ENCODE measurements at regions of chr16 and their contacts with region 1.

Region 1: DNA sequence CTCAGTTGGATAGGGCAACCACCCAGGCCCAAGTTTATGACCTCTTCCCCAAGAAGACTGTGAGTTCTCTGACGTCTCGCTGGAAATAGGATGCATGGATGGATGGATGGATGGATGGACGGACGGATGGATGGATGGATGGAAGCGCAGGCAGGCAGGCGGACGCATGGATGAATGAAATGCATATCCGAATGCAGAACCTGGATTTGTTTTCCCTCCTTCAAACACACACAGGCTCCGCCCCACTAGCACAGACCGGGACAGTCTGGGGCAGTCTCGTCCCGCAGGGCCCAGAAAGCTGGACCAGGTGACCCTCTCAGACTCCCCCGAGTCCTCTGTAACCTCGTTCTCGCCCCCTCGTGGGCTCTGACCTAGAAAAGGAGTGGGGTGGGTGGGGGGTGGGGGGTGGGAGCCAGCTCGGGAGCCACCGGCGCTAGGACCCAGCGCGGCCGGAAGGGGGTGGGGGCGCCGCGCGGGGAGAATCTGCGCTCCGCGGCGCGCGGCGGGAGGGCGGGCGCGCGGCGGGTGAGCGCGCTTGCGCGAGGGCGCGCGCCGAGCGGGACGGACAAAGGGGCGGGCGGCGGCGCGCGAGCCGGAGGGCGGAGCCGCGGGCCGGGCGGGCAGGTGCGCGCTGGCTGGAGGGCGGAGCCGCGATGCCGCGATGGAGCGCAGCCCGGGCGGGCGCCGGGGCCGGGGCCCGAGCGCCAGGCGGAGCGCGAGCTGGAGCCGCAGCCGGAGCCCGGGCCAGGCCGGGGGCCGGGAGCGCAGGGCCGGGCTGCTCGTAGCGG is at the start of gene SBK1:
- DNase-seq: peak; percentile 38
- ATAC-seq: peak; percentile 97
- H3K4me3 ChIP-seq: peak within 1 kb of the TSS; percentile 66
- H3K27ac ChIP-seq: peak within 1 kb of the TSS; percentile 55; the same call in 1 of the 2 replicates
- H3K4me1 ChIP-seq: no peaks in the 10 kb centered on the region
- H3K27me3 ChIP-seq: peaks cover 47% of the 10 kb centered on the region
- CTCF ChIP-seq: no peak
- POLR2A ChIP-seq: no peak
- RAD21 ChIP-seq: no peak
- total RNA-seq, gene SBK1: under 0.01 TPM in 1 of 2 replicates, not detected in the other

Region 2: DNA sequence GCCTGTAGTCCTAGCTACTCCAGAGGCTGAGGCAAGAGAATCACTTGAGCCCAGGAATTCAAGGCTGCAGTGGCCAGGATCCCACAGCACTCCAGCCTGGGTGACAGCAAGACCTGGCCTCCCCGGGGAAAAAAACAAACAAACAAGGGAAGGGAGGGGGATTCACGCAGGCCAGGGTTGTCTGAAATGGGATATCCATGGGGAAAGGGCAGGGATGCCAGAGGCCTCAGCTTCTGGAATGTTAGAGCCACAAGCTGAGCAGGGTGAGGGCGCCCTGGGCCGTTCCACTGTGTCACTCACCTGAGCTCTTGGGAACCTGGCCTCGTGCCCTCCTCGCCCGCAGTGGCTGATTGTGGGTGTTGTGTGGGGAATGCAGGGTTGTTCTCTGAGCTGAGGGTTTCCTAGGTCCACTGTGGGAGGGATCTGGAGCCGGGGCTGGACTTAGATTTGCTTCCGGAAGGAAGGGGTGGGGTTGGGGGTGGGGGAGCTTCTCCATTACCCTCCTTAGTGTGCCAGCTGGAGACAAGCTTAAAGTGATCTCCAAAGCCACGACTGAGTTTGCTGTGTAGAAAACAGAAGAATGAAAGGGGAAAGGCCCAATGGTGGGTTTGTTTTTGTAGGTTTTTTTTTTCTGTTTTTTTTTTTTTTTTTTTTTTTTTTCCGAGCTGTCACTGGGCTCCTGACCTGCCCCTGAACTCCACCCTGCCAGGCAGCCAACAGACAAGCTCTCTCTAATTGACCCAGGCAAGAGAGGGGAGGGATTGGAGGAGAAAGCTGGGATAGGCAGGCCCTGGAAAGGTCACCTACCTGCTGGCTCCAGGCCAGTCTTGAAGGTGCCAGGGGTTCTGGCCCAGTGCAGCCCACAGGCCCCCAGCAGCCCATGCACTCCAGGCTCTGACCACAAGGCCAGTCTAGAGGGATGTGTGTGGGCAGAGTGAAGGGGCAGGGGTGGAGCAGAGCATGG is 317.8 kb after region 1 on chr16 and contains the start of gene SULT1A1:
- CTCF ChIA-PET with region 1: no interaction called
- POLR2A ChIA-PET with region 1: no interaction called
- dilution Hi-C with region 1: no loop called
- in situ Hi-C with region 1: loop called (anchors 10 kb)
- intact Hi-C with region 1: no loop called
- DNase-seq: no peak
- ATAC-seq: peak; percentile 30; the same call in 1 of the 2 replicates
- H3K4me3 ChIP-seq: no peak within 1 kb of the TSS
- H3K27ac ChIP-seq: no peak within 1 kb of the TSS
- H3K4me1 ChIP-seq: no peaks in the 10 kb centered on the region; the same call in 1 of the 2 replicates
- H3K27me3 ChIP-seq: peaks cover 28% of the 10 kb centered on the region
- CTCF ChIP-seq: no peak
- POLR2A ChIP-seq: no peak
- RAD21 ChIP-seq: no peak
- total RNA-seq, gene SULT1A1: 1.1 and 1.6 TPM in 2 replicates

Measured in IMR-90 (cell line).